CD8-positive, alpha-beta T cell (primary cell): ENCODE measurements at regions of chr2 and their contacts with region 1.

Region 1: DNA sequence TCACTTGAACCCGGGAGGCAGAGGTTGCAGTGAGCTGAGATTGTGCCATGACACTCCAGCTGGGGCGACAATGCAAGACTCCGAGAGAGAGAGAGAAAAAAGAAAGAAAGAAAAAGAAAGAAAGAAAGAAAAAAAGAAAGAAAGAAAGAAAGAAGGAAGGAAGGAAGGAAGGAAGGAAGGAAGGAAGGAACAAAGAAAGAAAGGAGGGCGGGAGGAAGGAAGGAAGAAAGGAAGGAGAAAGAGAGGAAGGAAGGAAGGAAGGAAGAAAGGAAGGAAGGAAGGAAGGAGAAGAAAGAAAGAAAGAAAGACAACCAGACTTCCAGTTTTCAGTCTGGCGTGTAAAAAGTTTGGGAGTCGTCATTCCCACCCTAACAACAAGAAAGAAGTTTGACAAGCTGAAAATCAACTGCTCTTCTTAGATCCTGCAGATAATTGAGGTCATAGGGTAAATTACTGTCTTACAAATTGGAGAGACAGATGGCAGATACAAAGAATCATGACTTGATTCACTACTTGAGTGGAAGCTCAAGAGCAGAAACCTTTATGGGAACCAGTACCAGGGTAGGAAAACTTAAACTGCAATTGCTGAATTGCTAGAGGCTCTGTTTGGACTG is 15.1 kb upstream of the CYP27C1 start:
- DNase-seq: no peak
- ATAC-seq: no peak
- H3K4me3 ChIP-seq: no peak overlapping the region
- H3K4me3 Mint-ChIP-seq: no peak overlapping the region
- H3K27ac ChIP-seq: no peak overlapping the region
- H3K27ac Mint-ChIP-seq: no peak overlapping the region
- H3K4me1 ChIP-seq: no peaks in the 10 kb centered on the region
- H3K4me1 Mint-ChIP-seq: no peaks in the 10 kb centered on the region
- H3K27me3 ChIP-seq: no peaks in the 10 kb centered on the region
- H3K27me3 Mint-ChIP-seq: peaks cover 3% of the 10 kb centered on the region
- CTCF ChIP-seq: no peak

Region 2: GRCh38 chr2:127261804-127262406 is 26.7 kb after region 1 on chr2:
- CTCF ChIA-PET with region 1: no interaction called
- POLR2A ChIA-PET with region 1: no interaction called
- intact Hi-C with region 1: loop called in 1 of 2 experiments (anchors 1 kb)
- DNase-seq: no peak
- ATAC-seq: no peak
- H3K4me3 ChIP-seq: no peak overlapping the region
- H3K4me3 Mint-ChIP-seq: no peak overlapping the region
- H3K27ac ChIP-seq: no peak overlapping the region
- H3K27ac Mint-ChIP-seq: no peak overlapping the region
- H3K4me1 ChIP-seq: no peaks in the 10 kb centered on the region
- H3K4me1 Mint-ChIP-seq: peaks cover 1% of the 10 kb centered on the region
- H3K27me3 ChIP-seq: no peaks in the 10 kb centered on the region
- H3K27me3 Mint-ChIP-seq: no peaks in the 10 kb centered on the region
- CTCF ChIP-seq: no peak

Region 3: DNA sequence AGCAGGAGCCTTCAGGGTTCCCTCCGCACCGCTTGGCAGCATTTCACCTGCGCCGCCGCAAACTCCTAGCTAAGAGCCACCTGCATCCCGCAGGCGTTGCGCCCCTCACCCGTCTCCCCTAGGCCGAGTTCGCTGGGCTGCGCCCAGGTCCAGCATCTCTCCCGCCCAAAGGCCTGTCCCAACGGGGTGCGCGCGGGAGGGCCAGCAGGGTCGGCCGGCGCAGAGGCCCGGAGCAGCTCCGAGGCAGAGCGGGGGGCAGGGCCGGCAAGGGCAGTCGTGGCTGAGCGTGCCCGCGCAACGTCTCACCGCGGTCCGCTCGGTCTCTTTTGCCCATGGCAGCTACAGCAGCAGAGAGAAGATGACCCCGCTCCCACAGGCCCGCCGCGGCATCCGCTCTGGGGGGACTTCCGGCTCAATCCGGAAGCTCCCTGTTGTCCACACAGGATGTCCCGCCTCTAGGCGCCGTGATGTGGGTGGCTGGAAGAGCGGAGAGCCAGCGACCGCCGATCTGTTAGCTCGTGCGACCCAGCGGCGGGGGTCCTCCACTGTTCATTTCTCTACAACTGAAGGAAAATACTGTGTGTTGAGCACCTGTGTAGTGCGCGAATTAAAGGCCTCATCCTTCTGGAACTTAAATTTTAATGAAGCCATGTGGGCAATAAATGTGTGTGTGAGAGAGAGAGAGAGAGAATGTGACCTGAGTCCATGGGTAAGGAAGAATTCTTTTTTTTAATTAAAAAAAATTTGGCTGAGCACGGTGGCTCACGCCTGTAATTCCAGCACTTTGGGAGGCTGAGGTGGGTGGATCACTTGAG is 58.8 kb after region 1 on chr2 and contains the start of gene ERCC3:
- CTCF ChIA-PET with region 1: no interaction called
- POLR2A ChIA-PET with region 1: no interaction called
- intact Hi-C with region 1: no loop called
- DNase-seq: peak; percentile 56 to 90 (median 83)
- ATAC-seq: peak; percentile 91
- H3K4me3 ChIP-seq: peak within 1 kb of the TSS; percentile 75 to 91
- H3K4me3 Mint-ChIP-seq: peak within 1 kb of the TSS; percentile 94
- H3K27ac ChIP-seq: peak within 1 kb of the TSS; percentile 74 to 76
- H3K27ac Mint-ChIP-seq: peak within 1 kb of the TSS; percentile 91
- H3K4me1 ChIP-seq: peaks cover 13% of the 10 kb centered on the region
- H3K4me1 Mint-ChIP-seq: peaks cover 45% of the 10 kb centered on the region
- H3K27me3 ChIP-seq: no peaks in the 10 kb centered on the region
- H3K27me3 Mint-ChIP-seq: no peaks in the 10 kb centered on the region
- CTCF ChIP-seq: no peak
- total RNA-seq, gene ERCC3: 43.2 to 46.4 TPM